ENCODE measurements at regions of chr4 and their contacts with region 1.

Region 1: DNA sequence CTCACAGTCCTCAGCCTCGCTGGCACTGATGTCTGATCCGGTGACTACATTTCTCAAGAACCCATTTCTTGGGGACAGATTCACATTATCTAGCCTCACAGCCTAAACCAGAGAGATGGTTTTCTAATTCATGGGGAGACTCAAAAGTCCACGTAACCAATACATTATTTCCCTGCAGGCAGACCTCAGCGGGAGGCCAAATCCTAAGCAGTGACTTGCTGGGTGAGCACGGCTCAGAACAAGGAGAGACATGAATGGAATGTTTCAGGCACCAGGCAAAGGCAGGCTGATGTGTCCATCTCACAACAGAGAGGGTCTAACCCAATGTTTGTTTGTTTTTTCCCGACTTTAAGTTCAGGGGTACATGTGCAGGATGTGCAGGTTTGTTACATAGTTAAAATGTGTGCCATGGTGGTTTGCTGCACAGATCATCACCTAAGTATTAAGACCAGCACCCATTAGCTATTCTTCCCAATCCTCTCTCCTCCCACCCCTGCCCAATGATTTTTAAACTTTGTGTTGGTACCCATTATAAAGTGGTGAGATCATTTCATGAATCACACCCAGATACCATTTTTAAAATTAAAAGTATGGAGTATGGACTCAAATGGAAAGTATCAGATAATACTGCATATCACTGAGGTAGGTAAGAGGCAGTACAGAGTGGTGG is 53.3 kb downstream of the SCD5 start:
- DNase-seq: peak; percentile 77
- H3K4me3 Mint-ChIP-seq: no peak overlapping the region
- H3K27ac Mint-ChIP-seq: peak overlapping the region; percentile 31
- H3K4me1 Mint-ChIP-seq: peaks cover 30% of the 10 kb centered on the region
- H3K27me3 Mint-ChIP-seq: no peaks in the 10 kb centered on the region
- CTCF ChIP-seq: no peak

Region 2: GRCh38 chr4:82785611-82786400 is 40.5 kb after region 1 on chr4:
- CTCF ChIA-PET with region 1: no interaction called
- POLR2A ChIA-PET with region 1: interaction called, 13 read pairs
- intact Hi-C with region 1: no loop called
- DNase-seq: peak; percentile 96
- H3K4me3 Mint-ChIP-seq: peak overlapping the region; percentile 53
- H3K27ac Mint-ChIP-seq: peak overlapping the region; percentile 52
- H3K4me1 Mint-ChIP-seq: peaks cover 37% of the 10 kb centered on the region
- H3K27me3 Mint-ChIP-seq: no peaks in the 10 kb centered on the region
- CTCF ChIP-seq: no peak